Ascending aorta (tissue), 2 donors: ENCODE measurements at regions of chrX and their contacts with region 1.

Region 1: DNA sequence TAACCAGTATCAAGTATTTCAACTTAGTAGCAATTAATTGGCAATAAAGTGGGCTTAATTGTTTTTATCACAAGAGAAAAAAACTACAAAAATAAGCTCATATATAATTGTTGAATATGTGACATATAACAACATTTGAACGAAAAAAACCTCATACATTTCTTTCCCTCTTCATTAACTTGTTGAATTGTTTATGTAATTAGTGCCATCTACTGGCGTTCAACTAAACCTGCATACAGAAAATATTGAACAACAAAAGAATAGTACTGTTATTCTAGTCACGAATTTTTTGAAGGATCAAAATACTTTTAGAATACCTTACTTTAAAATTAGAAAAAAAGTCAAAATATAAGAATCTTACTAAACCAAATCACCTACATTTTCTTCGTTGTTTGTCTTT is 586.5 kb upstream of the FTHL17 start:
- DNase-seq: no peak
- H3K4me3 ChIP-seq: no peak overlapping the region
- H3K27ac ChIP-seq: no peak overlapping the region
- H3K4me1 ChIP-seq: no peaks in the 10 kb centered on the region
- H3K27me3 ChIP-seq: no peaks in the 10 kb centered on the region
- CTCF ChIP-seq: peak in 2 of 3 experiments; percentile 24 to 49

Region 2: DNA sequence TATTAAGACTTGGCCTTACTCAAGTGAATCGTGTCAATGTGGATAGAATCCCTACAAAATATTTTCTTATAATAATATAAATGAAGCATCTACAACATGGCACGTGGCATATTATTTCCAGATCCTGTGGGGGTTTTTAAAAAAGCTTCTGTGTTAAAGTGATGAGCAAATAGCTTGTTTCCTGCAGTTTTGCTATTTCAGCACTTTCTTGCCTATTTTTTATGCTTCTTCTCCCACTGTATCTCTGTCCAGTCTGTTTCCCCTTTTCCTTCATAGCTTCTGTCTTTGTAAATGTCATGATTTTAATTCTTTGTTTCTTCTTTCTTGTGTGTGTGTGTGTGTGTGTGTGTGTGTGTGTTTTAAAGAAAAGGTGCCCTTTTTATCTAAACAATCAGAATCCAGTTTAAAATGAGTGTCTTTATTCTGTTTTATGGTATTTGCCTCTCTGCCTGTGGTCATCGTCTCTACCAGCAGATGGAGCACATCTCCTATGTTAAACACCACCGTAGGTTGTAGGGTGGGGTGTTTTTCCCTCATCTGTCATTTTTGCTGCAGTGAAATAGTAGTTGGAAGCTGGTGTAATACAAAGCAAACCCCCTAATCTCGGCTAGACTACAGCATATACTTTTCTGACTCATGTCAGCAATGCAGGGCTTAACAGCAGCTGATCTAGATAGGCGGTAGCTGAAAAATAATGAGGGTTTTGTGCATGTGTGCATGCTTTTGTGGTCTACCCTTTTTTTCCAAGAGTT is 619.6 kb before region 1 on chrX:
- intact Hi-C with region 1: loop called (anchors 2 kb)
- DNase-seq: no peak
- H3K4me3 ChIP-seq: no peak overlapping the region
- H3K27ac ChIP-seq: no peak overlapping the region
- H3K4me1 ChIP-seq: no peaks in the 10 kb centered on the region
- H3K27me3 ChIP-seq: no peaks in the 10 kb centered on the region
- CTCF ChIP-seq: peak; percentile 19 to 54 (median 46)

Region 3: GRCh38 chrX:31213941-31214340 is 444.4 kb before region 1 on chrX:
- intact Hi-C with region 1: loop called (anchors 5 kb)
- DNase-seq: no peak
- H3K4me3 ChIP-seq: no peak overlapping the region
- H3K27ac ChIP-seq: no peak overlapping the region
- H3K4me1 ChIP-seq: no peaks in the 10 kb centered on the region
- H3K27me3 ChIP-seq: no peaks in the 10 kb centered on the region
- CTCF ChIP-seq: peak in 1 of 3 experiments; percentile 46

Region 4: GRCh38 chrX:31800219-31800618 is 141.9 kb after region 1 on chrX:
- intact Hi-C with region 1: no loop called
- DNase-seq: no peak
- H3K4me3 ChIP-seq: no peak overlapping the region
- H3K27ac ChIP-seq: no peak overlapping the region
- H3K4me1 ChIP-seq: no peaks in the 10 kb centered on the region
- H3K27me3 ChIP-seq: no peaks in the 10 kb centered on the region
- CTCF ChIP-seq: no peak